Activated CD4-positive, alpha-beta memory T cell treated with anti-CD3 and anti-CD28 coated beads, Interleukin-2, amount 10 ng/mL, durations not matched to agents 7 days and 5 days (primary cell): ENCODE measurements at regions of chr16 and their contacts with region 1.

Region 1: DNA sequence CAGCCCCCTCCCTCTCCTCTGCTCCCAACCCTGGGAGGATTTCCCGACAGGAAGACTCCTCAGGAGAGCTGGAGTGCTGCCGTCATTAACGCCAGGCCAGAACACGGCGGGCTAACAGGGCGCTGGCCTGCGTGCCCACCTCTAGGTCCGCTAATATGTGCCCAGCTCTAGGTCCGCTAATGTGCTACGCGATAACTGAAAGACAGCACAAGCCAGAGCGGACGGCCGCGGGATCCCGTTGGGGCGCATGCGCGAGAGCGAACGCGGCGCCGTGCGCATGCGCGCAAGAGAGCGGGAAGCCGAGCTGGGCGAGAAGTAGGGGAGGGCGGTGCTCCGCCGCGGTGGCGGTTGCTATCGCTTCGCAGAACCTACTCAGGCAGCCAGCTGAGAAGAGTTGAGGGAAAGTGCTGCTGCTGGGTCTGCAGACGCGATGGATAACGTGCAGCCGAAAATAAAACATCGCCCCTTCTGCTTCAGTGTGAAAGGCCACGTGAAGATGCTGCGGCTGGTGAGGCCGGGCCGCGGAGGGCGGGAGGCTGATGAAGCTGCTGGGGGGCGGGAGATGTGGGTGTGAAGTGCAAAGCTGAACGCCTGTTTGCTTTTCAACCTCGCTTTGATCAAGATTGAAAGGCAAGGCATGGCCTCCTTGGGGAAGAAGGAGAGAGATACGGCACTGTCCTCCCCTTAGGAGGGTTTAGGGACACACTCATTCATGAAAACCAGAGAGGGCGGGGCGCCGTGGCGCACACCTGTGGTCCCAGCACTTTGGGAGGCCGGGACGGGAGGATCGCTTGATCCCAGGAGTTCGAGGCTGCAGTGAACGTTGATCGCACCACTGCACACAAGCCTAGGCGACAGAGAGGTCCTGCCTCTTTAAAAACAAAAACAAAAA is at the start of gene CKLF:
- DNase-seq: peak; percentile 94
- H3K4me3 Mint-ChIP-seq: peak within 1 kb of the TSS; percentile 98
- H3K27ac Mint-ChIP-seq: peak within 1 kb of the TSS; percentile 91
- H3K4me1 Mint-ChIP-seq: peaks cover 77% of the 10 kb centered on the region
- H3K27me3 Mint-ChIP-seq: no peaks in the 10 kb centered on the region
- total RNA-seq, gene CKLF: 183 to 188 TPM

Region 2: DNA sequence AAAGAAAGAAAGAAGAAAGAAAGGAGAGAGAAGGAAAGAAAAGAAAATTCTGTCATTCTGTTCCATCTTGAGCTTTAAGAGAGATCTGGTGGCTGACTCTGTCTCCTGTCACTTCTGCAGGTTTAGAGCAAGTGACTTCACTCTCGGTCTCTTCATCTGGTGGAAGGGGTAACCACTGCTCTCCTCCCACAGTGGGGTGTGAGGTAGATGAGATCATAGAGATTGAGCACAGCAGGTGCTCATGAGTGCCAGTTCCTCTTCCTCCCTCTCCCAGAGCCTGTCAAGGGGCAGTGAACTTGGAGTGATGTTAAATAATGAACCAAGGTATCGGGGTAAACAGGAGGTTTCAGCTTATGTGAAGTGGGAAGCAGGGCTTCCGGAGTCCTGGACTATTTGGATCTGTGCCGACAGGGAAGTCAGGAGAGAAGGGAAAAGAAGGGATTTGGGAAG is 77.8 kb before region 1 on chr16:
- CTCF ChIA-PET with region 1: no interaction called
- POLR2A ChIA-PET with region 1: interaction called, 10 read pairs
- DNase-seq: peak; percentile 79
- H3K4me3 Mint-ChIP-seq: no peak overlapping the region
- H3K27ac Mint-ChIP-seq: peak overlapping the region; percentile 22
- H3K4me1 Mint-ChIP-seq: peaks cover 43% of the 10 kb centered on the region
- H3K27me3 Mint-ChIP-seq: peaks cover 11% of the 10 kb centered on the region

Region 3: GRCh38 chr16:66516808-66517585 is 35.5 kb before region 1 on chr16:
- CTCF ChIA-PET with region 1: interaction called, 36 read pairs
- POLR2A ChIA-PET with region 1: interaction called, 286 read pairs
- DNase-seq: peak; percentile 92
- H3K4me3 Mint-ChIP-seq: peak overlapping the region; percentile 81
- H3K27ac Mint-ChIP-seq: peak overlapping the region; percentile 97
- H3K4me1 Mint-ChIP-seq: peaks cover 73% of the 10 kb centered on the region
- H3K27me3 Mint-ChIP-seq: no peaks in the 10 kb centered on the region

Region 4: GRCh38 chr16:66521951-66522771 is 30.4 kb before region 1 on chr16:
- CTCF ChIA-PET with region 1: interaction called, 36 read pairs
- POLR2A ChIA-PET with region 1: interaction called, 286 read pairs
- DNase-seq: peak; percentile 97
- H3K4me3 Mint-ChIP-seq: peak overlapping the region; percentile 64
- H3K27ac Mint-ChIP-seq: peak overlapping the region; percentile 95
- H3K4me1 Mint-ChIP-seq: peaks cover 95% of the 10 kb centered on the region
- H3K27me3 Mint-ChIP-seq: no peaks in the 10 kb centered on the region

Region 5: GRCh38 chr16:66539623-66540469 is 12.7 kb before region 1 on chr16:
- CTCF ChIA-PET with region 1: interaction called, 3 read pairs
- POLR2A ChIA-PET with region 1: interaction called, 36 read pairs
- DNase-seq: no peak
- H3K4me3 Mint-ChIP-seq: no peak overlapping the region
- H3K27ac Mint-ChIP-seq: peak overlapping the region; percentile 42
- H3K4me1 Mint-ChIP-seq: peaks cover 18% of the 10 kb centered on the region
- H3K27me3 Mint-ChIP-seq: no peaks in the 10 kb centered on the region

Region 6: DNA sequence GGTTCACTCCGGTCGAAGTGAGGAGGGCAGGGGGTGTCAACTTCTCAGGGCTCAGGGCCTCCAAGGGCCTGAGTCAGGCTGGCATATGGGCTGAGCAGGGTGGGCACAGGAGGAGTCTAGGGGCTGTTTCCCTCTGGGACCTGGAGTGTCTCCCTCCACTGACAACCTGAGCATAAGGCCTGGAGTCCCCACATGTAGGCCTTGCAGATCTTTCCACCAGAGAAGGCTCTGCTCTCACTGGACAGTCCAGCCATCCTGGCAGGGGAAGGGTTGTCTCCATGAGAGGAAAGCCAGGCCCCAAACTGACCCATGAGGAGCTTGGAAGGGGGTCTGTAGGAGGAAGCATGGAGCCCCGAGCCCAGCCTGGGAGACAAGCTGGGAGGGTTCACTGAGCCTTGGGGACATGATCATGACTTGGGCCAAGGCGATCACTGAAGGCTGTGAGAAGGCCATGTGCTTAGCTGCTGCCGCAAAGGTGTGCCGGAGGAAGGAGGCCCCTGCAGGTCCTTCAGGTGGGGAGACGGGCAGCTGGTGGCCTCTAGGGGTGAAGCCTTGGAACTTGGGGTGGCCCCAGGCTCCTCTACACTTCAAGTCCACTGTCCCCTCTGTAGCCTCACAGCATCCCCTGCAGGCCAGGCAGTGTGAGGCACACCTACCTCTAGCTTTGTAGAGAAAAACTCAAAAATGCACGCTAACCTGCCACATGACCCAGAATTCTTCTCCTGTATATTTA is 36.6 kb after region 1 on chr16:
- CTCF ChIA-PET with region 1: interaction called, 12 read pairs
- POLR2A ChIA-PET with region 1: interaction called, 21 read pairs
- DNase-seq: peak; percentile 81
- H3K4me3 Mint-ChIP-seq: peak overlapping the region; percentile 67
- H3K27ac Mint-ChIP-seq: peak overlapping the region; percentile 47
- H3K4me1 Mint-ChIP-seq: peaks cover 26% of the 10 kb centered on the region
- H3K27me3 Mint-ChIP-seq: peaks cover 2% of the 10 kb centered on the region

Region 7: GRCh38 chr16:66596986-66597848 is 44.7 kb after region 1 on chr16:
- CTCF ChIA-PET with region 1: interaction called, 8 read pairs
- POLR2A ChIA-PET with region 1: interaction called, 40 read pairs
- DNase-seq: peak; percentile 38
- H3K4me3 Mint-ChIP-seq: peak overlapping the region; percentile 57
- H3K27ac Mint-ChIP-seq: peak overlapping the region; percentile 99
- H3K4me1 Mint-ChIP-seq: peaks cover 50% of the 10 kb centered on the region
- H3K27me3 Mint-ChIP-seq: no peaks in the 10 kb centered on the region